Activated naive CD4-positive, alpha-beta T cell treated with anti-CD3 and anti-CD28 coated beads for 36 hours (primary cell): ENCODE measurements at regions of chr7 and their contacts with region 1.

Region 1: DNA sequence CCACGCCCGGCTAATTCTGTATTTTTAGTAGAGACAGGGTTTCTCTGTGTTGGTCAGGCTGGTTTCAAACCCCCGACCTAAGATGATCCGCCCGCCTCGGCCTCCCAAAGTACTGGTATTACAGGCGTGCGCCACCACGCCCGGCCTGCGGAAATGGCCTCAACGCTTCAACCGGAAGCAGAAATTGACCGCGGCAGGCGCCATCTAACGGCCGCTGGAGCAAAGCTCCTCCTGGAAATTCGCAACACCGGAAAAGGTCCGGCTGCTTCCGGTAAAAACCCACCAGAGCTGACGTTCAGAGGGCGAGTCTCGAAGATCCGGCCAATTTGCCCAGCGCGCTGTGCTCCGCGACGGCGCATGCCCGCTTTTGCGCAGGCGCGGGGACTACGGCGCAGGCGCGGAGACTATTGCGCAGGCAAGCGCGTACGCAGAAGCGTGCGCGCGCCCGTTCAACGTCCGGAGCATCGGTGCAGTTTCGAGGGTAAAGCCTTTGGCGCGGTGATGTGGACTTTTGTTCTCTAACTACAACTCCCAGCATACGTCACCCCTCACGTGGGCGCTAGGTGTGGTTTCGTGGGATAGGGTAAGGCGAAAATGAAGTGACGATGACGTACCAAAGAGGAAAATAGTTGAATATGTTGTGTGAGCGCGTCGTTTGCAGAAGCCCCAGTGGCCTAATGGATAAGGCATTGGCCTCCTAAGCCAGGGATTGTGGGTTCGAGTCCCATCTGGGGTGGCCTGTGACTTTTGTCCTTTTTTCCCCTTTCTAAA is 915 bp upstream of the FMC1 start:
- DNase-seq: peak; percentile 100
- H3K4me3 Mint-ChIP-seq: peak overlapping the region; percentile 93
- H3K27ac Mint-ChIP-seq: peak overlapping the region; percentile 99
- H3K4me1 Mint-ChIP-seq: peaks cover 22% of the 10 kb centered on the region
- H3K27me3 Mint-ChIP-seq: peaks cover 3% of the 10 kb centered on the region

Region 2: GRCh38 chr7:138002096-138002827 is 1338.0 kb before region 1 on chr7:
- CTCF ChIA-PET with region 1: no interaction called
- intact Hi-C with region 1: loop called (anchors 1 kb)
- DNase-seq: peak; percentile 98
- H3K4me3 Mint-ChIP-seq: peak overlapping the region; percentile 91
- H3K27ac Mint-ChIP-seq: peak overlapping the region; percentile 76
- H3K4me1 Mint-ChIP-seq: peaks cover 25% of the 10 kb centered on the region
- H3K27me3 Mint-ChIP-seq: no peaks in the 10 kb centered on the region

Region 3: GRCh38 chr7:138886501-138886917 is 453.7 kb before region 1 on chr7:
- CTCF ChIA-PET with region 1: interaction called, 3 read pairs
- intact Hi-C with region 1: loop called (anchors 5 kb)
- DNase-seq: peak; percentile 52
- H3K4me3 Mint-ChIP-seq: no peak overlapping the region
- H3K27ac Mint-ChIP-seq: peak overlapping the region; percentile 69
- H3K4me1 Mint-ChIP-seq: peaks cover 13% of the 10 kb centered on the region
- H3K27me3 Mint-ChIP-seq: no peaks in the 10 kb centered on the region

Region 4: GRCh38 chr7:139095194-139095659 is 245.0 kb before region 1 on chr7:
- CTCF ChIA-PET with region 1: no interaction called
- intact Hi-C with region 1: loop called (anchors 1 kb)
- DNase-seq: peak; percentile 84
- H3K4me3 Mint-ChIP-seq: peak overlapping the region; percentile 70
- H3K27ac Mint-ChIP-seq: peak overlapping the region; percentile 95
- H3K4me1 Mint-ChIP-seq: peaks cover 90% of the 10 kb centered on the region
- H3K27me3 Mint-ChIP-seq: no peaks in the 10 kb centered on the region

Region 5: DNA sequence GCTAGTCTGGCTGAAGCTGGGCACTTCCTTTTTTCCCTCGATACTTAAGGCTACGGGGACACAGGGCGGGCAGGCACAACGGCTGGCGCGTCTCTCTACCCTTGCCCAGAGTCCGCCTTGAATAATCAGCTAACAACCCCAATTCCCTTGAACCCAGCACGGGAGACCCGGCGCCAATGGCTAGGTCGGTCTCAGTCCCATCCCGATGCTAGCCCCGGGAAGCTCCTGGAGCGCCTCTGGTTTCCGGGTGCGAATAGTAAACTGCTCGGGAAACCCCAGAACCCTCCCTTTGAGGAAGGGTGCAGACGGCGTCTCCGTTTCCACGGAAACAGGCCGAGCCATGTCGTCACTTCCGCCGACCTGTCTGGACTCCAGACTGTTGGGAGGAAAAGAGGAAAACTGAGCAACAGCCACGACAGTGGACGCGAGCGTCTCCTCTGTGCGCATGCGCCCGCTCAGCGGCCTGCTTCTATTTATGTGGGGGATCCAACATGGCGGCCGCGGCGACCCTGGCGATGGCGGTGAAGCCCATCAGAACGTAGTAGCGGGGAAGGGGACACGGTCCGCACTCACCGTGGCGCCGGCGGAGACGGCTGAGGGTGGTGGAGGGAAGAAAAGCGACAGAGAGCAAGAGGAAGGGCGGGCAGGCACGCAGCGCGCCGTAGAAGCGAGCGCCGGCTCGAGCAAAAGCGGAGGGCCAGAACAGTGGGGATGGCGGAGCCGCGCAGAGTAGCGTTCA is 109.3 kb before region 1 on chr7 and contains the start of gene UBN2:
- CTCF ChIA-PET with region 1: interaction called, 5 read pairs
- intact Hi-C with region 1: loop called (anchors 1 kb)
- DNase-seq: peak; percentile 95
- H3K4me3 Mint-ChIP-seq: peak within 1 kb of the TSS; percentile 90
- H3K27ac Mint-ChIP-seq: peak within 1 kb of the TSS; percentile 75
- H3K4me1 Mint-ChIP-seq: peaks cover 20% of the 10 kb centered on the region
- H3K27me3 Mint-ChIP-seq: no peaks in the 10 kb centered on the region
- total RNA-seq, gene UBN2: 9.7 to 10.6 TPM

Region 6: GRCh38 chr7:139777948-139778841 is 438.0 kb after region 1 on chr7 and contains the start of gene HIPK2:
- CTCF ChIA-PET with region 1: no interaction called
- intact Hi-C with region 1: loop called (anchors 5 kb)
- DNase-seq: peak; percentile 68
- H3K4me3 Mint-ChIP-seq: peak within 1 kb of the TSS; percentile 96
- H3K27ac Mint-ChIP-seq: peak within 1 kb of the TSS; percentile 84
- H3K4me1 Mint-ChIP-seq: peaks cover 36% of the 10 kb centered on the region
- H3K27me3 Mint-ChIP-seq: peaks cover 14% of the 10 kb centered on the region
- total RNA-seq, gene HIPK2: 16.8 to 17.3 TPM

Region 7: GRCh38 chr7:140230861-140231770 is 890.9 kb after region 1 on chr7:
- CTCF ChIA-PET with region 1: no interaction called
- intact Hi-C with region 1: loop called (anchors 2 kb)
- DNase-seq: peak; percentile 85
- H3K4me3 Mint-ChIP-seq: peak overlapping the region; percentile 97
- H3K27ac Mint-ChIP-seq: peak overlapping the region; percentile 98
- H3K4me1 Mint-ChIP-seq: peaks cover 38% of the 10 kb centered on the region
- H3K27me3 Mint-ChIP-seq: no peaks in the 10 kb centered on the region